Activated CD4-positive, alpha-beta memory T cell treated with anti-CD3 and anti-CD28 coated beads for 36 hours (primary cell): ENCODE measurements at regions of chr20 and their contacts with region 1.

Region 1: DNA sequence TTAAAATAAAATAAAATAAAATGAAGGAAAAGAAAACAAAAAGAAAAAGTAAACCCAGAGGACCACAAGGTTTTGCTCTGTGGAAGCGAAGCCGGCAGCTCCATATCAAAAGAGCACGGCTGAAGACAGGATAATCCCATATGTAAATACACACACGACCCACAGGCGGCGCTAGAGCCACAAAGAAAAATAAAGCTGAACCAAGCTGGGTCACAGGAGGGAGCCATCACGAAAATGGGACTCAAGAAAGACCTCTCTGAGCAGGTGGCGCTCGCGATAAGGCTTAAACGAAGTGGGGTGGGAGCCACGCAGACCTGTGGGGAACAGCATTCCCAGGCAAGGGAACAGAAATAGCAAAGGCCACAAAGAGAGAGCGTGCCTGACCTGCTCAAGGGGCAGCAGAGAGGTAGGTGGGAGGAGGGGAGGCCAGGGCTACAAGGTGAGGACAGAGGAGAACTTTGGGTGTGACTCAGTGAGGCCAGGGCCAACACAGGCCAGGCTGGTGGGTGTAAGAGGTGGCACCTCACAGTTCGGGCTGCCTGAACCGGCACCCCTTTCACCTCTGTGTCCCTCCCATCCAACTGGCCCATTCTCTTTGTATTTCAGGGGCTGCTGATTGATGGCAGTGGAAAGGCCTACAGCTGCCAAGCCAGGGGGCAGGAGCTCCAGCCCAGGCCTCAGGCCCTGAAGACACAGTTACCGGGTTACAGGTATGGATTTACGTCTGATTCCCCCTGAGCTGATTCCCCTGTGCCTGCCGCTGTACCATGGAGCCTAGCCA is 26.0 kb downstream of the PTGIS start:
- DNase-seq: peak; percentile 87
- H3K4me3 Mint-ChIP-seq: no peak overlapping the region
- H3K27ac Mint-ChIP-seq: peak overlapping the region; percentile 38
- H3K4me1 Mint-ChIP-seq: peaks cover 17% of the 10 kb centered on the region
- H3K27me3 Mint-ChIP-seq: peaks cover 11% of the 10 kb centered on the region

Region 2: GRCh38 chr20:49338061-49338460 is 203.9 kb before region 1 on chr20:
- CTCF ChIA-PET with region 1: interaction called, 14 read pairs
- POLR2A ChIA-PET with region 1: no interaction called
- intact Hi-C with region 1: no loop called
- DNase-seq: no peak
- H3K4me3 Mint-ChIP-seq: no peak overlapping the region
- H3K27ac Mint-ChIP-seq: no peak overlapping the region
- H3K4me1 Mint-ChIP-seq: no peaks in the 10 kb centered on the region
- H3K27me3 Mint-ChIP-seq: peaks cover 10% of the 10 kb centered on the region

Region 3: GRCh38 chr20:49361862-49362660 is 179.9 kb before region 1 on chr20:
- CTCF ChIA-PET with region 1: no interaction called
- POLR2A ChIA-PET with region 1: no interaction called
- intact Hi-C with region 1: no loop called
- DNase-seq: no peak
- H3K4me3 Mint-ChIP-seq: no peak overlapping the region
- H3K27ac Mint-ChIP-seq: no peak overlapping the region
- H3K4me1 Mint-ChIP-seq: no peaks in the 10 kb centered on the region
- H3K27me3 Mint-ChIP-seq: peaks cover 9% of the 10 kb centered on the region

Region 4: GRCh38 chr20:49575551-49576060 is 33.7 kb after region 1 on chr20:
- CTCF ChIA-PET with region 1: interaction called, 22 read pairs
- POLR2A ChIA-PET with region 1: no interaction called
- intact Hi-C with region 1: no loop called
- DNase-seq: peak; percentile 3
- H3K4me3 Mint-ChIP-seq: no peak overlapping the region
- H3K27ac Mint-ChIP-seq: no peak overlapping the region
- H3K4me1 Mint-ChIP-seq: peaks cover 14% of the 10 kb centered on the region
- H3K27me3 Mint-ChIP-seq: peaks cover 13% of the 10 kb centered on the region

Region 5: DNA sequence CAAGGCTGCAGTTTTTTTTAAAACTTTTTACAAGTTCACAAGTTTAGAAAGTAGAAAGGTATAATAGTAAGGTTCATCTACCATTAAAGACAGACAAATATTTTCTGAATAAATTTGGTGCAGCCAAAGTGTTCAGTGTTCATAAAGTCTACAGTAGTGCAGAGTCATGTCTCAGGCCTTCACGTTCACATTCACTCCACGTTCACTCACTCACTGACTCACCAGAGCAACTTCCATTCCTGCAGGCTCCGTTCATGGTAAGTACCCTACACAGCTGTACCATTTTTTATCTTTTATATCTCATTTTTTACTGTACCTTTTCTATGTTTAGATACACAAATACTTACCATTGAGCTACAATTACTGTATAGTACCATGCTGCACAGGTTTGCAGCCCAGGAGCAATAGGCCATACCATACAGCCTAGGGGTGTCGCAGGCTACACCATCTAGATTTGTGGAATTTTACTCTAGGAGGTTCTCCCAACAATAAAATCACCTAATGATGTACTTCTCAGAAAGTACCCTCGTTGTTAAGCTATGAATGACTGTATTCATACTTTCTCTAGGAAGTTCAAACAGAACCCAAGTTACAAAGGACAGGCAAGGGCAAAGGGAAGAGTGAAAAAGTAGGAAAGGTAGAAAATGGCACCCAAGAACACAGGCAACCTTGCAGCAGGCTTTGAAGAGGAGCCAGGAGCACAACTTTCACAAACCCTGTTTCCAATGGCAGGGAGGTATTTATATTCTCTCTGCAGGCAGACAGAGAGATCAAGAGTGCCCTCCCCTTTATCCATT is 104.4 kb after region 1 on chr20:
- CTCF ChIA-PET with region 1: no interaction called
- POLR2A ChIA-PET with region 1: no interaction called
- intact Hi-C with region 1: no loop called
- DNase-seq: no peak
- H3K4me3 Mint-ChIP-seq: no peak overlapping the region
- H3K27ac Mint-ChIP-seq: no peak overlapping the region
- H3K4me1 Mint-ChIP-seq: no peaks in the 10 kb centered on the region
- H3K27me3 Mint-ChIP-seq: no peaks in the 10 kb centered on the region

Region 6: DNA sequence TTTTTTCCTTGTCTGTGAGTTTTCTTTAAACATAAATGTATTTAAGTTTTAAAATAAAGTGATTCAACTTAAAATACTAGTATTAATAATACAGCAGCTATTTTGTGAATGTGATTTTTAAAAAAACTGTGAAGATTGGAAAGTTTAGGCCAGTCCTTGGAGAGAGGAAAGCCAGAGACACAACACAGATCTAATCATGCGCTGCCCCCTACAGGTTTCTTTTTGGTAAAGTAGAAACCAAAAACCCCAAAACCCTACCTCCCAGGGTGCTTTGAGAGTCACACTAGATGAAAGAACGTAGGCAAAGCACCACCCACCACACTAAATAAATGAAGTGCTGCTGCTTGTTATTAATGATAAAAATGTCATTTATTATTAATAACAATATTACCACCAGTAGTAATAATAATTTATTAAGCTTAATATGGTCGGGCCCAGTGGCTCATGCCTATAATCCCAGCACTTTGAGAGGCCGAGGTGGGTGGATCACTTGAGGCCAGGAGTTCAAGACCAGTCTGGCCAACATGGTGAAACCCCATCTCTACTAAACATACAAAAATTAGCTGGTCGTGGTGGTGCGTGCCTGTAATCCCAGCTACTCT is 304.4 kb after region 1 on chr20:
- CTCF ChIA-PET with region 1: interaction called, 18 read pairs
- POLR2A ChIA-PET with region 1: no interaction called
- intact Hi-C with region 1: loop called (anchors 10 kb)
- DNase-seq: peak; percentile 50
- H3K4me3 Mint-ChIP-seq: no peak overlapping the region
- H3K27ac Mint-ChIP-seq: no peak overlapping the region
- H3K4me1 Mint-ChIP-seq: no peaks in the 10 kb centered on the region
- H3K27me3 Mint-ChIP-seq: no peaks in the 10 kb centered on the region

Region 7: GRCh38 chr20:49928401-49929141 is 386.6 kb after region 1 on chr20:
- CTCF ChIA-PET with region 1: no interaction called
- POLR2A ChIA-PET with region 1: no interaction called
- intact Hi-C with region 1: loop called (anchors 5 kb)
- DNase-seq: peak; percentile 86
- H3K4me3 Mint-ChIP-seq: no peak overlapping the region
- H3K27ac Mint-ChIP-seq: no peak overlapping the region
- H3K4me1 Mint-ChIP-seq: peaks cover 5% of the 10 kb centered on the region
- H3K27me3 Mint-ChIP-seq: peaks cover 3% of the 10 kb centered on the region